CD4-positive, alpha-beta T cell (primary cell): ENCODE measurements at regions of chr1 and their contacts with region 1.

Region 1: DNA sequence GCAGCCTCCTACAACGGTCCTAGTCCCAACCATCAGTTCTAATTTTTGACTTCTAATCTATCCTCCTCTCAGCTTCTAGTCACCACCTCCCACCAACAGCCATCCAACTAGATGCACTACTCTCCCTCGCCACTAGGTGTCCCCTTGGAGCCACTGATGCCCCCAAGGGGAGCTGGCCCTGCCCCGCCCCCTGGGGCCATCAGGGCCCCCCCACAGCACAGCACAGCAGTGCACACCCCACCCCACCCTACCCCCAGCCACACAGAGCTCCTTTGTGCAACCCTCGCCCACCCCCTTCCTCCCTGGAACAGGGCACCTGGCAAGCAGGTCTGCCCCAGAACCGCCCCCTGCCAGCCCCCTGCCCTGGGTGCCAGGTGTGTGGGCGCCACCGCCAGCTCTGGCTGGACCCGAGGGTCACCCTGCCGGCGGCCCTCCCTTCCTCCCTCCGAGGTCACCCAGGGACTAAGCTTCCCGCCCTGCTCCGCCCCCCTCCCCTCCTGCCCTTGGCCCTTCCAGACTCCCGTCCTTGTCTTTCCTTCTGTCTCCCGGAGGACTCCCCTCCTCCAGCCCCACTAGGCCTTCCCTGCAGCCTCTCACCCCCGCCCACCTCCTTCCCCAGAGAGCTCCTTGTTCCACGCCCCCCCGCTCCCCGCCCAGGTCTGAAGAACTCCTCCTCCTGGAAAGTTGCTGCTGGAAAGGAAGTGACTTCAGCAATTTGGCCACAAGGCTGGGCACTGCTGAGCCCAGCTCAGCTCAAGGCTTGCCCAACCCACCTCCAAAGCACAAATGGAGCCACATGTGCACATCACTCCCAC is 47.0 kb downstream of the AHDC1 start:
- DNase-seq: peak; percentile 60 to 86 (median 65)
- ATAC-seq: peak; percentile 90
- H3K4me3 ChIP-seq: no peak overlapping the region
- H3K4me3 Mint-ChIP-seq: peak overlapping the region; percentile 23
- H3K27ac ChIP-seq: no peak overlapping the region
- H3K27ac Mint-ChIP-seq: peak overlapping the region; percentile 50
- H3K4me1 ChIP-seq: peaks cover 28% of the 10 kb centered on the region
- H3K4me1 Mint-ChIP-seq: peaks cover 39% of the 10 kb centered on the region
- H3K27me3 ChIP-seq: no peaks in the 10 kb centered on the region
- H3K27me3 Mint-ChIP-seq: no peaks in the 10 kb centered on the region
- CTCF ChIP-seq: peak; percentile 94

Region 2: DNA sequence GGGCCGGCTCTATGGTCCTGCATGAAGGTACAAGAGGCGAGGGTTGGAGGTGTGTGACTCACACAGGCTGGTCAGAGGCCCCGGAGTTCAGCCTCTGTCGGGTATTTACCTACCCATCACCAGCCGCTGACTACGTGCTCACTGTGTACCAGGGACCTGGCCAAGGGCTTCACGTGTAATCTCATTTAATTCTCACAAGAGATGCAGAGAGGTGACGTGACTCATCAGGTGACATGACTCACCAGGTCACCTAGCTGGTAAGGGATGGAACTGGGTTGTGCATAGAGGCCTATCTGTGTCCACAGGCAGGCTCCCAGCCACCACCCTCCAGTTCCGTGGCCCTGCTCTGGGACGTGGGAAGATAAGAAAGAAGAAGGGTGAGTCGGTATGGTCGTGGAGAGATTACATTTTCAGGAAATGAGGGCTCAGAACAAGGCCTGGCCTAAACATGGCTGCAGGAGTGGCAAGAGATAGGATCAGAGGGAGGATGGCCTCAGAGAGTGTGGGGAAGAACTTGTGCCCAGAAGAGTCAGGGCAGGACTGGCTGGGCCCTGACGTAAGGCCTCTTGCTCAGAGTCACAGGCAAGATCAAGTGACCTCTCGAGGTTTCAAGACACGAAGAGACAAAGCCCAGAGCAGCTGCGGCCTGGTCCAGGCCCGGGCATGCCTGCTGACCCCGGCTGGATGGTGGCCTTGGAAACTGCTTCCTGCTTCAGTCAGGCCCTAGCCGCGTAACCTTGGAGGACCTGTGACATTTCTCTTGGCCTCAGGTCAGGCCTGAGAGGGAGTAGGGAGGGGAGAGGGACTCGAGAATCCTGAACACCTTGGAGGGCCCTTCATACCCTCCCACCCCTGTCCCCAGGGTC is 14.3 kb before region 1 on chr1:
- CTCF ChIA-PET with region 1: no interaction called
- POLR2A ChIA-PET with region 1: no interaction called
- intact Hi-C with region 1: no loop called
- DNase-seq: peak in 1 of 14 experiments; percentile 46
- ATAC-seq: no peak
- H3K4me3 ChIP-seq: no peak overlapping the region
- H3K4me3 Mint-ChIP-seq: no peak overlapping the region
- H3K27ac ChIP-seq: no peak overlapping the region
- H3K27ac Mint-ChIP-seq: no peak overlapping the region
- H3K4me1 ChIP-seq: no peaks in the 10 kb centered on the region
- H3K4me1 Mint-ChIP-seq: peaks cover 5% of the 10 kb centered on the region
- H3K27me3 ChIP-seq: no peaks in the 10 kb centered on the region
- H3K27me3 Mint-ChIP-seq: no peaks in the 10 kb centered on the region
- CTCF ChIP-seq: no peak

Region 3: GRCh38 chr1:27568300-27569087 is 11.5 kb after region 1 on chr1:
- CTCF ChIA-PET with region 1: interaction called, 56 read pairs
- POLR2A ChIA-PET with region 1: interaction called, 6 read pairs
- intact Hi-C with region 1: no loop called
- DNase-seq: peak; percentile 84 to 98 (median 92)
- ATAC-seq: peak; percentile 91
- H3K4me3 ChIP-seq: peak overlapping the region; percentile 46
- H3K4me3 Mint-ChIP-seq: peak overlapping the region; percentile 67
- H3K27ac ChIP-seq: peak overlapping the region; percentile 49 to 62
- H3K27ac Mint-ChIP-seq: peak overlapping the region; percentile 74
- H3K4me1 ChIP-seq: peaks cover 31% of the 10 kb centered on the region
- H3K4me1 Mint-ChIP-seq: peaks cover 60% of the 10 kb centered on the region
- H3K27me3 ChIP-seq: no peaks in the 10 kb centered on the region
- H3K27me3 Mint-ChIP-seq: no peaks in the 10 kb centered on the region
- CTCF ChIP-seq: peak; percentile 68

Region 4: GRCh38 chr1:27594562-27595510 is 37.8 kb after region 1 on chr1:
- CTCF ChIA-PET with region 1: interaction called, 16 read pairs
- POLR2A ChIA-PET with region 1: no interaction called
- intact Hi-C with region 1: no loop called
- DNase-seq: peak in 2 of 14 experiments; percentile 25 to 37
- ATAC-seq: peak; percentile 33
- H3K4me3 ChIP-seq: no peak overlapping the region
- H3K4me3 Mint-ChIP-seq: no peak overlapping the region
- H3K27ac ChIP-seq: no peak overlapping the region
- H3K27ac Mint-ChIP-seq: no peak overlapping the region
- H3K4me1 ChIP-seq: peaks cover 62% of the 10 kb centered on the region
- H3K4me1 Mint-ChIP-seq: peaks cover 6% of the 10 kb centered on the region
- H3K27me3 ChIP-seq: no peaks in the 10 kb centered on the region
- H3K27me3 Mint-ChIP-seq: no peaks in the 10 kb centered on the region
- CTCF ChIP-seq: no peak

Region 5: GRCh38 chr1:29096231-29096886 is 1539.4 kb after region 1 on chr1:
- CTCF ChIA-PET with region 1: no interaction called
- POLR2A ChIA-PET with region 1: no interaction called
- intact Hi-C with region 1: no loop called
- DNase-seq: no peak
- ATAC-seq: no peak
- H3K4me3 ChIP-seq: no peak overlapping the region
- H3K4me3 Mint-ChIP-seq: no peak overlapping the region
- H3K27ac ChIP-seq: no peak overlapping the region
- H3K27ac Mint-ChIP-seq: no peak overlapping the region
- H3K4me1 ChIP-seq: no peaks in the 10 kb centered on the region
- H3K4me1 Mint-ChIP-seq: no peaks in the 10 kb centered on the region
- H3K27me3 ChIP-seq: no peaks in the 10 kb centered on the region
- H3K27me3 Mint-ChIP-seq: no peaks in the 10 kb centered on the region
- CTCF ChIP-seq: no peak